ENCODE measurements at regions of chr6 and their contacts with region 1.

Region 1: GRCh38 chr6:41424370-41425058 is 89.1 kb downstream of the NCR2 start:
- DNase-seq: peak; percentile 89
- H3K4me3 ChIP-seq: no peak overlapping the region
- H3K27ac ChIP-seq: no peak overlapping the region
- H3K4me1 ChIP-seq: peaks cover 13 to 33% (median 25%) of the 10 kb centered on the region in 4 donors
- H3K27me3 ChIP-seq: peaks cover 14% of the 10 kb centered on the region
- CTCF ChIP-seq: peak; percentile 83 to 90 (median 89)
- EP300 ChIP-seq: no peak
- POLR2A ChIP-seq: no peak

Region 2: DNA sequence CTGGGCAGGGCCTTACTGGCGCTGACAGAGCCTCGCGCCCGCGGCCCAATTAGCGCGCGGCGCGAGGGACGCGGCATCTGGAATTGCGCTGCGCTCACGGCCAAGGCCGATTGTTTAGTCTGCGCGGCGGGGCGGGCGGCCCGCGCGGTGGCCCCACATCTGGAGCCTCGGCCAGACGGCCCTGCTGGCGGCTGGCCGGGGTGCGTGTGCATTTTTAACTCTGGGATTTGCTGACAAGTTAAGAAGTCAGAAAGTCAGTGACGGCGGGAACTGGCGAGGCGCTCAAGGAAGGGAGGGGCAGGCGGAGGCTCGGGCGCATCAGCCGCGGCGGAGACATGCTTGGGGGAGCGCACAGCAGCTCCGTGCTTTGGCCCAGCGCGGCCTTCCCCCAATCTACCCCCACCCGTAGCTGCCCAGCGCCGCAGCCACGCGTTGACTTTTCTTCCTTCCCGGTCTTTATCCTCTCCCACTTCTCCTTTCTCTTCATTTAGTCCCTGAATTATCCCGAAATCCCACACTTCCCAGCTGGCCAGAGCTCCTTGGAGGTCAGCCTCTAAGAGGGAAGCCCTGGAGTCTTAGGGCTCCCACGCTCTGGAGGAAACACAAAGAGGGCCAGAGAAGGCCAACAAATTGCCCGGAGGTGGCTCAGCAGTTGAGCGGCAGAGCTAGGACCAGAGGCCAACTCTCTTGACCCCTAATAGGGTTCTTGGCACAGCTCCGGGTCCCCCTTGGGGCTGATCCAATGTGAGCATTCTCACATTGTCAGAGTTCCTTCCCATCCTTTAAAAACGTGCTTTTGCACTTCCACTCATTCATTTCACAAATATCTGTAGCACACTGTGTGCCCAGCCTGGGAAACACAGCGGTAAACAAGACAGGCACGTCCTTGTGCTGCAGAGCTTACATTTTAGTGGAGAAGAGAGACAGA is 80.9 kb after region 1 on chr6:
- in situ Hi-C with region 1: no loop called
- intact Hi-C with region 1: loop called (anchors 5 kb)
- DNase-seq: peak; percentile 72
- H3K4me3 ChIP-seq: peak overlapping the region in 3 of 4 donors; percentile 1 to 51 (median 29)
- H3K27ac ChIP-seq: peak overlapping the region; percentile 71 to 79 (median 75)
- H3K4me1 ChIP-seq: peaks cover 6 to 28% (median 24%) of the 10 kb centered on the region in 4 donors
- H3K27me3 ChIP-seq: peaks cover 30% of the 10 kb centered on the region
- CTCF ChIP-seq: no peak
- EP300 ChIP-seq: no peak
- POLR2A ChIP-seq: no peak

Region 3: GRCh38 chr6:41545703-41546474 is 121.4 kb after region 1 on chr6 and contains the start of gene FOXP4:
- in situ Hi-C with region 1: no loop called
- intact Hi-C with region 1: loop called (anchors 2 kb)
- DNase-seq: peak; percentile 92
- H3K4me3 ChIP-seq: peak within 1 kb of the TSS; percentile 72 to 93 (median 84)
- H3K27ac ChIP-seq: peak within 1 kb of the TSS; percentile 87 to 93 (median 90)
- H3K4me1 ChIP-seq: peaks cover 7 to 40% (median 26%) of the 10 kb centered on the region in 4 donors
- H3K27me3 ChIP-seq: peaks cover 5% of the 10 kb centered on the region
- CTCF ChIP-seq: no peak
- EP300 ChIP-seq: no peak
- POLR2A ChIP-seq: no peak
- total RNA-seq, gene FOXP4: 13.8 to 45.6 (median 17.2) TPM